ENCODE measurements at regions of chr1 and their contacts with region 1.

Region 1: GRCh38 chr1:117059678-117060440 is at the start of gene TTF2:
- DNase-seq: peak; percentile 86
- H3K4me3 ChIP-seq: peak within 1 kb of the TSS; percentile 84 to 89 (median 85)
- H3K27ac ChIP-seq: peak within 1 kb of the TSS; percentile 91 to 96 (median 92)
- H3K4me1 ChIP-seq: peaks cover 0 to 32% (median 7%) of the 10 kb centered on the region in 3 donors
- H3K27me3 ChIP-seq: no peaks in the 10 kb centered on the region
- CTCF ChIP-seq: peak; percentile 10 to 51 (median 38)
- POLR2A ChIP-seq: peak in 1 of 4 donors; percentile 52
- total RNA-seq, gene TTF2: 7.2 to 24.2 (median 19.2) TPM

Region 2: DNA sequence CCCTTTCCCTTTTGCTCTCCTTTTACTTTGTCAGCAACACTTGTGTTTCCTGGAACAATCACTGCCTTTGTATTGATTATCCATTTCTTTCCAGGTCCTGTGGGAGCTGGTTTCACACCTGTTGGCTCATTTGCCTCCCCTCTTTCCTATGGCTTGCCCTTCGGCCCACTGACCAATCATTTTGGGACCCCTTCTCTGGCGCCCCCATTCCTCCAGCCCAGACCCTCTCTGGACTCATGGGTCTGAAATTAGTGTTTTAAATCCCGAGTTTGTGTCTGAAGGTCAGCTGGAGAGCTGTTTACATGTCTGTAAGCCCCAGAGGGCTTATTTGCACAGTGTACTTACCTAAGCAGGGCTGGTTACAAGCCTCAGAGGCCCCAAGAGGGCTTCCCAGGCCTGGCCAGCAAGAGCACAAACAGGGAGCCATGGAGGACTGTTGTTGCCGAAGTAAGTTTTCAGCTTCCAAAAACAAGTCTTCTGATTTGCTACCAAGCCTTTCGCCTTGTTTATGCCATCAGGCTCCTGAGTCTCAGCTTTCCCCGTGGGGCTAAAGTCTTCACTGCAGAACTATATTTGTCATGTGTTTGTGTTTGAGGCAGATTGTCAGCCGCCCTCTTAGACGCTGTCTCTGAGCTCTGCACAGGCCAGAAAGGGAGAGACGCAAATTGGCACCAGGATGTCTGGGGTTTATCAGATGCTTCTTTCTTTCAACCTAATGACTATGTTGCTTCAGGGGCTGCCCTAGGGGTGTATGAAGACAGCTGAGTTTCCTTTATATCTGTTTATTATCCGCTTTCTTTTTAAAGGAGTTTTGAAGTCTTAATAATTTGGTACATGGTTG is 593.8 kb before region 1 on chr1:
- intact Hi-C with region 1: no loop called
- DNase-seq: no peak
- H3K4me3 ChIP-seq: no peak overlapping the region
- H3K27ac ChIP-seq: no peak overlapping the region
- H3K4me1 ChIP-seq: no peaks in the 10 kb centered on the region
- H3K27me3 ChIP-seq: peaks cover 0 to 13% (median 0%) of the 10 kb centered on the region in 4 donors
- CTCF ChIP-seq: no peak
- POLR2A ChIP-seq: no peak

Region 3: DNA sequence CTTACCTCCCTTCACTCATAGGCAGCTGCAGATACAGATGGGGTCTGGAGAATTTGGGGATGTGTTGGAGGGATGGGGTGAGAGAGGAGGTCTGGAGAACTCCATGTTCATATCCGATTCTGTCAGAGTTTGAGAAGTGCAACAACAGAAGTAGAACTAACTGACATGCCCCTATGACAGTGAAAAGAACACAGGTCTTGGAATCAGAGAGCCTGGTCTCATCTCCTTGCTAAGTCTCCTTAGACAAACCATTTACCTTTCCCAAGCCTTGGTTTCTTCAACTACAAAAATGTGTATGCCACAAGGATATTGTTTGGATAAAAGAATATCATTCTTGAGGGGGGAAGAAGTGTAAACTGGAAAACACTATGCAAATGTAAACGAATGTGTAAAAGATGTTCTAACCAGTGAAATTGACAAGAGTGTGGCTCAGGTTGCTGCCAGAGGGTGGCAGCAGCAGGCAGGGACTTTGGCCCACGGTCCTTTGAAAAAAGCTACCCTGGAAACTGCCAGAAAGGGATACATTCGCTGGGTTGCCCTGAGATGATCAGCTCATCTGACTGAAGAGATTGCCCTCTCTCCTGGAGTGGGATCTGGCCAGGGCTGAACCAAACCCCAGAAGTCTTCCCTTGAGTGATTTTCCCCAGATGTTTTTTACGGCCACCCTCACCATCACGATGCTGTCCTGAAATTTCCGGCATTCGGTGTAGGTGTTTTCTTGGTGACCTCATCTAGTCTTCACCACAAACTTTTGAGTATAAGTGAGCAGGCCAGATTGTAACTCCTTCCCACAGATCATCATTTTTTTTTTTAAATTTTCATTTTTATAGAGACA is 322.6 kb before region 1 on chr1:
- intact Hi-C with region 1: loop called (anchors 5 kb)
- DNase-seq: no peak
- H3K4me3 ChIP-seq: no peak overlapping the region
- H3K27ac ChIP-seq: peak overlapping the region; percentile 44 to 66 (median 58)
- H3K4me1 ChIP-seq: peaks cover 4 to 28% (median 15%) of the 10 kb centered on the region in 3 donors
- H3K27me3 ChIP-seq: no peaks in the 10 kb centered on the region
- CTCF ChIP-seq: peak; percentile 77 to 88 (median 80)
- POLR2A ChIP-seq: no peak

Region 4: DNA sequence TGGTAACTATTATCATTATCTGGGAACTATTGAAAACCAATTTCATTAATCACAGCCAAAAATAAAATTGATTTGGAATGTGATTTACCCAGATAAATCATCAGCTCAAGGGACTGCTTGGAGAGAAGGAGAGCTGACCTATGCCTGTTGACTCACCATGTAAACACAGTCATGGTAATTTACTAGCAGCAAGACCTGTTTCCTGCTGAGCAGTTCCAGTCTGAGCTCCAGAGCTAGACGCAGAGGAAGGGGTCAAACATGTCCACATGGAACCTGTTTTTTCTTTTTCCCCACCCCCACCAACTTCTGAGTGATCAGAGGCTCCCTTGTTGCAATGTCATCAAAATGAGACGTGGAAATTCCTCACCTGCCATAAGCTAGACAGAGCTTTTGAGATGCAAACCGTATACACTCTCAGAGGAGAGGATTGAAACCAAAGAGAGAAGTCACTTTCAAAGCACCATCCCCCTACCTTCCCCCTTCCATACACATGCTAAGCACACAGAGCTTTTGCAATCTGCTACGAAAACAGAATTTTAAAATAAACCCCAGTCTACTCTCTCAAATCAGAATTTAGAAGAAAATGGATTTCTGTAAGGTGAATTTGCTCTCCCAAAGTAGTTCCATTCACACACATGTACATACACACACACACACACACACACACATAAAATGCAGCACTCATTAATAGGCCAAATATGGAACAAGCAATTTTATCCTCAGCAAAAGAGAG is 206.0 kb before region 1 on chr1:
- intact Hi-C with region 1: loop called (anchors 10 kb)
- DNase-seq: no peak
- H3K4me3 ChIP-seq: no peak overlapping the region
- H3K27ac ChIP-seq: peak overlapping the region in 1 of 4 donors; percentile 10
- H3K4me1 ChIP-seq: peaks cover 5 to 38% (median 13%) of the 10 kb centered on the region in 3 donors
- H3K27me3 ChIP-seq: no peaks in the 10 kb centered on the region
- CTCF ChIP-seq: peak in 1 of 6 experiments; percentile 5
- POLR2A ChIP-seq: no peak

Region 5: DNA sequence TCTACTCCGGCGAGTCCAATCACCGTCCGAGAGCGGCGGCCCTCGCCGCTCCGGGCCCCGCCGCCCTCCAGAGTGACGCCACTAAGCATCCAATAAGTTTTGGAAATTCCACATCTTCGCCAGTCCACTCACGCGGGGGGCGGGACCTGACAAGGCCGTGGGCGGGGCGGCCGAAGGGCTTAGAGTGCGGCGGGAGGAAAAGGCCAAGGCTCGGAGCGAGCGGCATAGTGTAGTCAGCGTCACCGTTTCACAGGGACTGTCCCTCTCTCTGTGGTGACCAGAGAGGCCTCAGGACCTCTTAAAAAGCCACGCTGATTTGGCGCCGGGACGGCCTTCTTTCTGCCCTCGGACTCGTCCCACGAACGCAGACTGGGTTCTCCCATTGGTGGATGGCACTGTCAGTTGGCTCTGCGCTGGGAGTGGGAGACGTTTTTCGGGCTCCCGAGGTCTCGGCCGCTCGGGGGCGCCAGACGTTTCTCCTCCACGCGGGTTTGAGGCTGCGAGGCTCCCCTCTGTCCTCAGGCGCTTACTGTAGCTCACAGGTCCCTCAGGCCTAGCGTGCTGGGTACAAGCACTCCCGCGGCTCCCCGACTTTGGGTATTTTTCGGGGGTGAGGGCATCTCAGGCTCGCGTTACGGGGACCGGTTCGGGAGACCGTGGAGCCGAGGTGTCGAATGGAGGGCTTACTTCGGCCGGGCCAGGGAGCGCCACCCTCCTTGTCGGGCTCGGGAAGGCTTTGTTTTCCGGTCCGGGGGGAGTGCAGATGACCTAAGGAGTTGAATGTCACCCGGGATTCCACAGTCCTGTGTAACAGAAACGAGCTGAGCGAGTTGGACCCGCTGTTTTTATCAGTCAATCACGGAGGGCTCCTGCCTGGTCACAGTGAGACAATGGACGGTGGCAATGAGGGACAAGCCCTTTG is 62.2 kb after region 1 on chr1:
- intact Hi-C with region 1: loop called (anchors 10 kb)
- DNase-seq: peak; percentile 69
- H3K4me3 ChIP-seq: peak overlapping the region; percentile 65 to 91 (median 76)
- H3K27ac ChIP-seq: peak overlapping the region; percentile 83 to 96 (median 93)
- H3K4me1 ChIP-seq: peaks cover 5 to 21% (median 6%) of the 10 kb centered on the region in 3 donors
- H3K27me3 ChIP-seq: no peaks in the 10 kb centered on the region
- CTCF ChIP-seq: peak in 5 of 6 experiments; percentile 58 to 71 (median 66)
- POLR2A ChIP-seq: peak in 1 of 4 donors; percentile 19

Measured in esophagus squamous epithelium (tissue), 5 donors.